RWPE1 (cell line): ENCODE measurements at regions of chr3 and their contacts with region 1.

Region 1: GRCh38 chr3:116770815-116771450 is 61.4 kb downstream of the TUSC7 start:
- DNase-seq: peak; percentile 50
- H3K27ac ChIP-seq: no peak overlapping the region
- CTCF ChIP-seq: peak; percentile 87

Region 2: DNA sequence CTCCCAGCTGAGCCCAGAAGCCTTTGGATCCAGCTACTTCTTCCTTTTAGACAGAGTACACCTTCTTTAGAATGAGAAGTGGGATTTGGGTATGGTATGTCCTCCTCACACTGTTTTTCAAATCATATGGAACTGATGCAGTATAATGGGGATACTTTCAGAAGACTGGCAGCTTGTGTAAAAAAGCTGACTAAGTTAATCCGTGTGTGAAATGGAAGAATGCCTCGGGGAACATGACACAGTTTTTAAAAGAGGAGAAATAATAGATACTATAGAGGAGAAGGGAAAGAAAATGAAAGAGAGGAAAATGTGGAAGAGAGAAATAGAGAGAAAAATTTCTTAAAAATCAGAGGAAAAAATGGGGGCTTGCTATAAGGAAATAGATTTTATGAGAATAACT is 13.6 kb before region 1 on chr3:
- CTCF ChIA-PET with region 1: interaction called, 11 read pairs
- POLR2A ChIA-PET with region 1: no interaction called
- DNase-seq: no peak
- H3K27ac ChIP-seq: no peak overlapping the region
- CTCF ChIP-seq: no peak